ENCODE measurements at regions of chr10 and their contacts with region 1.

Region 1: GRCh38 chr10:102245101-102245931 is at the start of gene GBF1:
- DNase-seq: peak; percentile 99
- H3K4me3 ChIP-seq: peak within 1 kb of the TSS; percentile 100
- H3K27ac ChIP-seq: peak within 1 kb of the TSS; percentile 83
- H3K27me3 ChIP-seq: peaks cover 6% of the 10 kb centered on the region
- CTCF ChIP-seq: no peak
- polyA plus RNA-seq, gene GBF1: 31.9 and 43.8 TPM in 2 replicates

Region 2: GRCh38 chr10:102322914-102323313 is 77.6 kb after region 1 on chr10:
- CTCF ChIA-PET with region 1: no interaction called
- POLR2A ChIA-PET with region 1: interaction called, 13 read pairs
- DNase-seq: no peak
- H3K4me3 ChIP-seq: no peak overlapping the region
- H3K27ac ChIP-seq: no peak overlapping the region
- H3K27me3 ChIP-seq: no peaks in the 10 kb centered on the region
- CTCF ChIP-seq: no peak

Measured in AG04450 (cell line).